Sigmoid colon (tissue), 7 donors: ENCODE measurements at regions of chr19 and their contacts with region 1.

Region 1: GRCh38 chr19:49590071-49590970 is 661 bp upstream of the PRR12 start:
- DNase-seq: peak; percentile 96
- H3K4me3 ChIP-seq: peak overlapping the region; percentile 71 to 95 (median 88)
- H3K27ac ChIP-seq: peak overlapping the region; percentile 92 to 97 (median 96)
- H3K4me1 ChIP-seq: peaks cover 0 to 43% (median 26%) of the 10 kb centered on the region in 4 donors
- H3K27me3 ChIP-seq: no peaks in the 10 kb centered on the region
- CTCF ChIP-seq: peak in 2 of 4 experiments; percentile 7 to 20
- EP300 ChIP-seq: no peak
- POLR2A ChIP-seq: peak; percentile 59 to 77

Region 2: GRCh38 chr19:48872182-48872883 is 718.0 kb before region 1 on chr19 and contains the start of gene PPP1R15A:
- intact Hi-C with region 1: loop called (anchors 5 kb)
- DNase-seq: peak; percentile 99
- H3K4me3 ChIP-seq: peak within 1 kb of the TSS; percentile 93 to 100 (median 94)
- H3K27ac ChIP-seq: peak within 1 kb of the TSS; percentile 99 to 100 (median 100)
- H3K4me1 ChIP-seq: peaks cover 0 to 65% (median 55%) of the 10 kb centered on the region in 4 donors
- H3K27me3 ChIP-seq: no peaks in the 10 kb centered on the region
- CTCF ChIP-seq: peak in 3 of 4 experiments; percentile 20 to 37 (median 29)
- EP300 ChIP-seq: peak in 1 of 4 donors; percentile 66
- POLR2A ChIP-seq: peak; percentile 99
- total RNA-seq, gene PPP1R15A: 22.1 to 69.8 (median 31.2) TPM

Region 3: GRCh38 chr19:49641688-49642491 is 51.6 kb after region 1 on chr19 and contains the start of gene SCAF1:
- intact Hi-C with region 1: loop called (anchors 1 kb)
- DNase-seq: peak; percentile 100
- H3K4me3 ChIP-seq: peak within 1 kb of the TSS; percentile 83 to 95 (median 90)
- H3K27ac ChIP-seq: peak within 1 kb of the TSS; percentile 97 to 100 (median 99)
- H3K4me1 ChIP-seq: peaks cover 0 to 70% (median 60%) of the 10 kb centered on the region in 4 donors
- H3K27me3 ChIP-seq: no peaks in the 10 kb centered on the region
- CTCF ChIP-seq: no peak
- EP300 ChIP-seq: peak in 2 of 4 donors; percentile 17 to 90
- POLR2A ChIP-seq: peak; percentile 97 to 98
- total RNA-seq, gene SCAF1: 10.9 to 21.3 (median 12.5) TPM

Region 4: GRCh38 chr19:49676690-49677231 is 86.4 kb after region 1 on chr19:
- intact Hi-C with region 1: loop called (anchors 5 kb)
- DNase-seq: peak; percentile 100
- H3K4me3 ChIP-seq: peak overlapping the region; percentile 71 to 96 (median 94)
- H3K27ac ChIP-seq: peak overlapping the region; percentile 92 to 95 (median 94)
- H3K4me1 ChIP-seq: peaks cover 0 to 54% (median 51%) of the 10 kb centered on the region in 4 donors
- H3K27me3 ChIP-seq: no peaks in the 10 kb centered on the region
- CTCF ChIP-seq: no peak
- EP300 ChIP-seq: no peak
- POLR2A ChIP-seq: no peak